PC-3 (cell line): ENCODE measurements at regions of chr10 and their contacts with region 1.

Region 1: DNA sequence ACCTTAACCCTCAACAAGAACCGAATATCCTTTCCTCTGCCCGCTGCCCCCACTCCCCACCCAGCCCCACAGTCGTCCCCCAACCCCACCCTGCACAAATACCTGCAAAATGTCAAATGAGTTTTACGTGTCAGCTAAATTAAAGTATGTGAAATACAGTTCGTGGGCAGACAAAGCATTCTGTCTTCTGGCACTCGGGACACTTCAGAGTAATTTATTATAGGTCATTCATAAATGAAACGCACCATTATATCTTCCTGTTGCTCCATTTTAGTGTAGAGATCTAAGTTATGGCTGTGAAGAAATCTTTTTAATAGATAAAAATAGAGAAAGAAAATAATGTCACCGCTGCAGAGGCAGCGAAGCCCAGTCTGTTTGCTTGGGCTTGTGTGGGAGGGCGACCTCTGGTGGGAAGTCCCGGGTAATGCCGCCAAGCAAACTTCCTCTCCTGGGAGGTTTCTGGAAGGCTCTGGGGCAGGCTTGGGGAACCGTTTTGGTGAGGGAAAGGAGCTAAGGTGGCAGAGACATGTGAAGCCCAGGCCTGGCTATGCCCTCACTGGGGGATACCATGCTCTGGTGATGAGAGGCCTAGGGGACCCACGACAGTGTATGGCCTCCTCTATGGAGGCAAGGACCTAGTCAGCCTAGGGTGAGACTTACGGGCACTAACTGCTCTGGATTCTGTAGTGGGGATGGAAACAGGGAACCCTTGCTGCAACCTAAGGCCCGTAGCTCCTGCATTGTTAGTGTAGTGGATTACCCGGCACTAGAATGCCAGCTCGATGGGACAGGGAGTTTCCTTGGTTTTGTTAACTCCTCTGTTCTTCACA is 604.9 kb downstream of the LRMDA start:
- DNase-seq: peak; percentile 99
- ATAC-seq: peak; percentile 83
- H3K4me3 ChIP-seq: peak overlapping the region; percentile 27
- H3K27ac ChIP-seq: peak overlapping the region; percentile 6
- H3K4me1 ChIP-seq: peaks cover 23% of the 10 kb centered on the region
- H3K27me3 ChIP-seq: peaks cover 34% of the 10 kb centered on the region
- CTCF ChIP-seq: no peak

Region 2: DNA sequence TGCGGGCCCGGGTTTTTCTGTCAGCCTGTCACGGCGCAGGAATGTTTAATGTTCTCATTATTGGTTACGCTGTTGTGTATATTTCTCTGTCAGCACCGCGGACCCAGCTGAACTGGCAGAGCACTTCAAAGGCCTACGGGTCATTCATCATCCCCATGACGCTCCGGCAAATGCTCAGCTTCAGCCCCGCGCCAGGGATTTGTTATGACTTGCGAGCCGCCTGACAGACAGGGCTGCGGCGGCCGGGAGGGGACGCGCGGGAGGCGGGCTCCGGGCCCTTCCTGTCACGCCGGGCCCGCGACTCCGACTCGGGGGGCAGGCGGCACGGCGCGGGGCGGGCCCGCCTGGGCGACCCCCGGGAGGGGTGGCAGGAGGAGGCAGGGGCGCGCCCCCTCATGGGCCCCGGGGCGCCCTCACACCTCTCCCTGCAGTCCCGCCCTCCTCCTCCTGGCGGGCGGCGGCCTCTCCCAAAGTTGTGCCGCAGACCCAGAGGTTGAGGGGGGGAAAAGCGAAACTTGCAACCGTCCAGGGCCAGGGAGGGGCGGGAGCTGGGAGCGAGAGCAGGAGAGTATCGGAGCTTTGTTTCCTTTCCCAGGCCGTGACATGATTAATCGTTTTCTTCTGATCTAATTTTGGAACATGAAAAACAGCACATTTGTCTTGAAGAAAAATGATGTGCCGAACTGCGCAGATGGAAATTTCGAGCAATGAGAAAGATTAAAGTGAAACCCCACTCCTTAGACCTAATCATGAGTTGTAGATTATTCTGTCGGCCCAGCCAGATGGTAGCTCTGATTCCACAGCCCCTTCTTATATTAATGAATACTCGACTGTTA is 741.2 kb before region 1 on chr10:
- CTCF ChIA-PET with region 1: interaction called, 3 read pairs
- POLR2A ChIA-PET with region 1: no interaction called
- intact Hi-C with region 1: loop called (anchors 10 kb)
- DNase-seq: peak; percentile 99
- ATAC-seq: peak; percentile 90
- H3K4me3 ChIP-seq: peak overlapping the region; percentile 66
- H3K27ac ChIP-seq: peak overlapping the region; percentile 6
- H3K4me1 ChIP-seq: peaks cover 19% of the 10 kb centered on the region
- H3K27me3 ChIP-seq: no peaks in the 10 kb centered on the region; the same call in 1 of the 2 replicates
- CTCF ChIP-seq: peak; percentile 65

Region 3: DNA sequence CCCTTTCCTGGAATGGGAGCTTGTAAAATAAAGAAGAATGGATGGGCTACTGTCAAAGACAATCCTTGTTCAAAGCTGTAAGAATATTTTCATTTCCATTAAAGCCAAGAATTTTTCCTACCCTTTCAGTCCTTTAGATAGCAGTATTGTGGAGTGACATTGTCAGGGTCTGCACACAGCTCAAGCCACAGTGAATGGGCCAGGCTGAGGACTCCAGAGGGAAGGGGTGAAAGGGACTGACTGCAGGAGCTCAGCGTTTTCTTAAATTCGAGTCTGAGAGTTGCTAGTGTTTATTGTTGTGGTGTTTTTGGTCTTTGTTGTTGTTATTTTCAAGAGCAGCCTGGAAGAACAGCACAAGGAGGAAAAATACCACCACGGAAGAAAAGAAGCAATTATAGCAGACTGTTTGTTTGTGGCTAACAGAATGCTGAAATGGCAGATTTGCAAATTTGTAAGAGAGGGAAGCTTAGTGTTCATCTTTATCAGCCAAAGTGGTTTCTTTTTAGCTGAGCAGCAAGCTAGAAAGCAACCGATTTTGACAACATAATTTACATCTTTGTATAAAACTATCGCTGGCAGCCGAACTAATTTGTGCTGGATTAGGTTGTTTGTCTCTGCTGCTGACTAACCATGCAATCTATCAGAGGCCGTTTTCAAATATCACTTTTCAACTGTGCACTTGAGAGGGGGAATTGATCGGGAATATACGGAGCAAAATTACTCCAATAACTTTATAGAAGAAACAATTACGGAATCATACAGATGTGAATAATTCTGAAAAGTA is 412.8 kb before region 1 on chr10:
- CTCF ChIA-PET with region 1: no interaction called
- POLR2A ChIA-PET with region 1: no interaction called
- intact Hi-C with region 1: loop called (anchors 2 kb)
- DNase-seq: no peak
- ATAC-seq: no peak
- H3K4me3 ChIP-seq: no peak overlapping the region
- H3K27ac ChIP-seq: no peak overlapping the region
- H3K4me1 ChIP-seq: no peaks in the 10 kb centered on the region
- H3K27me3 ChIP-seq: peaks cover 42% of the 10 kb centered on the region
- CTCF ChIP-seq: no peak

Region 4: GRCh38 chr10:75772153-75772887 is 264.0 kb before region 1 on chr10:
- CTCF ChIA-PET with region 1: interaction called, 8 read pairs
- POLR2A ChIA-PET with region 1: no interaction called
- intact Hi-C with region 1: loop called (anchors 2 kb)
- DNase-seq: peak; percentile 68
- ATAC-seq: no peak
- H3K4me3 ChIP-seq: peak overlapping the region; percentile 52
- H3K27ac ChIP-seq: peak overlapping the region; percentile 76
- H3K4me1 ChIP-seq: peaks cover 48% of the 10 kb centered on the region
- H3K27me3 ChIP-seq: peaks cover 17% of the 10 kb centered on the region; the same call in 1 of the 2 replicates
- CTCF ChIP-seq: no peak

Region 5: GRCh38 chr10:76150139-76150875 is 114.0 kb after region 1 on chr10:
- CTCF ChIA-PET with region 1: no interaction called
- POLR2A ChIA-PET with region 1: no interaction called
- intact Hi-C with region 1: no loop called
- DNase-seq: peak; percentile 50
- ATAC-seq: peak; percentile 47
- H3K4me3 ChIP-seq: no peak overlapping the region
- H3K27ac ChIP-seq: no peak overlapping the region
- H3K4me1 ChIP-seq: no peaks in the 10 kb centered on the region
- H3K27me3 ChIP-seq: peaks cover 60% of the 10 kb centered on the region
- CTCF ChIP-seq: no peak

Region 6: DNA sequence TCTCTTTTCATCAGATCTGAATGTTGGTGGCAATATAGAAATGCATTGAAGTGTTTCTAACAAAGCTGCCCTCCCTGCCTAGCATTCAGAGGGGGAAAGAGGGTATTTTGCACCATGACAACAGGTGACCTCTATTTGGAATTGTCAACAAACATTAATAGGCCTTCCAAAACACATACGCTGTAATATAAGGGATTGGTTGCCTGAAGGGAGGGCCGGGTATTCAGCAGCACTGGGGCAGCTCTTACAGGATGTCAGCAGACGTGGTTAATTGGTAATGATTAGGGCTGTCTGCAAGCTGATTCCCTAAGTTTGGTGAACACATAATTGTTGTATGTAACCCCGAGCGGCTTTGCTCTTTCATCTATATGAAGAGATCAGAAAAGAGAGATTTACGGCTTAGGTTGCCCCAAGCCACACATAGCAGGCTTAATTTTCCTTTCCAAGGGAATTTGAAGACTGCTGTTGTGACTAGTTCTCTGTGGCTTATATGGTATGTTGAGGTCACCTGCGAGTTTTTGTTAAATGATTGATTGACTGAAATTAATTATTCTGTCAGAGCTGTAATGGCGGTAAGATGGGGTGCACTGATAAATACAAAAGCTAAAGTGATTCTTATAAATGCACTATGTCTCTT is 154.4 kb after region 1 on chr10:
- CTCF ChIA-PET with region 1: no interaction called
- POLR2A ChIA-PET with region 1: no interaction called
- intact Hi-C with region 1: loop called (anchors 1 kb)
- DNase-seq: no peak
- ATAC-seq: no peak
- H3K4me3 ChIP-seq: no peak overlapping the region
- H3K27ac ChIP-seq: no peak overlapping the region
- H3K4me1 ChIP-seq: no peaks in the 10 kb centered on the region
- H3K27me3 ChIP-seq: peaks cover 90% of the 10 kb centered on the region
- CTCF ChIP-seq: no peak

Region 7: DNA sequence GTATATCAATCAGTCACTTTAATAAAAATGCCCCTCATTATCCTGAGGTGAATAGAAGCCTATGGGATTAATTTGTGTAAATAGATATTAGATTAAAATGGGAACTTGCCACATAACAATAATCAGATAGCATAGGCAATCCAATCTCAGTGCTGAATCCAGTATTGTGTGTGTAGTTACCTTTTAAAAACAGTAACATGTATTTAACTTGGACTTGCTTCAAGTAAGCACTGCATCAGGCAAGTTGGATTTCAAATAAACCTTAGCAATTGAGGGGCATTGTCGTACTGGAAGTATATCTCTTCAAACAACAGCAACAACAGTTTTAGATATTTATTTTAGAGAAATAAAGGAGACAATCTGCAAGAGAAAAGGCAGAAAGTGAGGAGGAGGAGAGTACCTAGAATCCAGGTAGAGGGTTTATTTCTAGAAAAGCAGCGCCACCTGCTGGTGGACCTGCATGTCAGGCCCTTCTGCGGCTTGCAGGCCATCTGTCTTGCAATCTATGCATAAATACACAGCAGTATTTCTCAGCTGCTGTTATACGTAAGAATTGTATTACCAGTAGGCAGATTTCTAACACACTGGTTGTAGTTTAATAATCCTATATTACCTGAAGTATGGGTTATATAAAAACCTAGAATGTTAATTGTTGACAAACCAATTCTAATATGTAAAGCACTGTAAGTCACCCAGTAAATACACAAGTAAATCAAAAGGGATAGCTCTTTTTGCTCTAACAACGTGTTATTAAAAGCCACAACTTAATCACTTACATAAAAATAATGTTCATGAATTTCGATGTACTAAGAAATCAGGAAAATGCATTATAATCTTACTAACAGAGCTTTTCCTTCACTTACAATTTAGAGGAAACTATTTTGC is 948.5 kb after region 1 on chr10:
- CTCF ChIA-PET with region 1: no interaction called
- POLR2A ChIA-PET with region 1: no interaction called
- intact Hi-C with region 1: loop called (anchors 1 kb)
- DNase-seq: peak; percentile 100
- ATAC-seq: peak; percentile 95
- H3K4me3 ChIP-seq: no peak overlapping the region
- H3K27ac ChIP-seq: no peak overlapping the region
- H3K4me1 ChIP-seq: peaks cover 18% of the 10 kb centered on the region
- H3K27me3 ChIP-seq: no peaks in the 10 kb centered on the region
- CTCF ChIP-seq: peak; percentile 100